Activated T-helper 1 cell treated with anti-CD3 and anti-CD28 coated beads, Interleukin-12 subunit alpha, Interleukin-12 subunit beta, Interleukin-2, Interleukin-4 antibody, amounts not matched to agents 30 ng/mL and 10 ng/mL and 1 ng/mL, durations not matched to agents 14 hours and 24 hours and 36 hours (primary cell): ENCODE measurements at regions of chr11 and their contacts with region 1.

Region 1: DNA sequence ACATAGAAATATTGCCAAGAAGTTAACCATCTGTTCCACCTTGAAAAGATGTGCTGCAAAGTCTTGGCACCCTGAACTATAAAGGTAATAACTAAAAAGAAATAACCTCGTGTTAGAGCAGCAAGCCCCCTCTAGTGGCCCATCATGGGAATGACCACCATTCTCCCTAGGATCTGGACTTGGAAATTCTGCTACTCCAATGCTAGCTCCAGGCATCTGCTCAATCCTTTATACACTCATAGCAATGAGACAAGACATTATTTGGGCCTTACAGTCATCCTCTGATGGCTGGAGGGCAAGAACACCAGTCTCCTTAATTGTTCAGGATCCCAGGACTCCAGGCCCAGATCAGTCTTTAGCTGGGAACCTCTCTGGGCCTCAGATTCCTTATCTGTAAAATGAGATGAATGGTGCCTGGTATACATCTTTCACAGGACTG is 76.0 kb downstream of the CWC15 start:
- DNase-seq: no peak
- H3K4me3 Mint-ChIP-seq: no peak overlapping the region
- H3K27ac Mint-ChIP-seq: no peak overlapping the region
- H3K4me1 Mint-ChIP-seq: no peaks in the 10 kb centered on the region
- H3K27me3 Mint-ChIP-seq: peaks cover 3% of the 10 kb centered on the region

Region 2: DNA sequence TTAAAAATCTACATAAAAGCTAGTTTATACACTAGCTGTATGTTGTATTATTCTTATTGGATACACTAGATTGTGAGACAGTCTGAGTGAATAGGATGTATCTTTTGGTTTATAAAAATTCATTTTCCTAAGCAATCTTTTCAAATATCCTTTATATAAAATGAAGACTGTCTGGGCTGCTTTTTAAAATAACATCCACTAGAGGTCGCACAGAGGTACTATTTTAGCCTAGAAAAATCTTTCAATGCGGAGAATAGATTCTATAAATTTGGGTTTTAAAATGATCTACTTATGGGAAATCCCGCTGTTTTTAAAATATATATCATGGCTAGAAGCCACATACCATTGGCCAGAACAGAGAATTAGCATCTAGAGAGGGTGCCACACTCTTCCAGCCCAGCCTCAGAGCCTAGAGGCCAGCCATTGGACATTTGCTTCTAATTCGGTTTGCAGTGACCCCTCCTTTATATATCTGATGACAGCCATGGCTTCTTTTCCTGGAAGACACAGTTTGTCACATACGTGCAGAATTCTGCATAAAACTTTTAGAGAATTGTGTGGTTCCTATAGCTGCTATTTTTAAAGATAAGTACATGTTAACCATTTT is 377.8 kb before region 1 on chr11:
- intact Hi-C with region 1: loop called (anchors 1 kb)
- DNase-seq: no peak
- H3K4me3 Mint-ChIP-seq: no peak overlapping the region
- H3K27ac Mint-ChIP-seq: no peak overlapping the region
- H3K4me1 Mint-ChIP-seq: no peaks in the 10 kb centered on the region
- H3K27me3 Mint-ChIP-seq: peaks cover 27% of the 10 kb centered on the region

Region 3: GRCh38 chr11:94623120-94623735 is 274.1 kb before region 1 on chr11:
- intact Hi-C with region 1: loop called (anchors 1 kb)
- DNase-seq: peak; percentile 27
- H3K4me3 Mint-ChIP-seq: no peak overlapping the region
- H3K27ac Mint-ChIP-seq: no peak overlapping the region
- H3K4me1 Mint-ChIP-seq: no peaks in the 10 kb centered on the region
- H3K27me3 Mint-ChIP-seq: peaks cover 7% of the 10 kb centered on the region

Region 4: DNA sequence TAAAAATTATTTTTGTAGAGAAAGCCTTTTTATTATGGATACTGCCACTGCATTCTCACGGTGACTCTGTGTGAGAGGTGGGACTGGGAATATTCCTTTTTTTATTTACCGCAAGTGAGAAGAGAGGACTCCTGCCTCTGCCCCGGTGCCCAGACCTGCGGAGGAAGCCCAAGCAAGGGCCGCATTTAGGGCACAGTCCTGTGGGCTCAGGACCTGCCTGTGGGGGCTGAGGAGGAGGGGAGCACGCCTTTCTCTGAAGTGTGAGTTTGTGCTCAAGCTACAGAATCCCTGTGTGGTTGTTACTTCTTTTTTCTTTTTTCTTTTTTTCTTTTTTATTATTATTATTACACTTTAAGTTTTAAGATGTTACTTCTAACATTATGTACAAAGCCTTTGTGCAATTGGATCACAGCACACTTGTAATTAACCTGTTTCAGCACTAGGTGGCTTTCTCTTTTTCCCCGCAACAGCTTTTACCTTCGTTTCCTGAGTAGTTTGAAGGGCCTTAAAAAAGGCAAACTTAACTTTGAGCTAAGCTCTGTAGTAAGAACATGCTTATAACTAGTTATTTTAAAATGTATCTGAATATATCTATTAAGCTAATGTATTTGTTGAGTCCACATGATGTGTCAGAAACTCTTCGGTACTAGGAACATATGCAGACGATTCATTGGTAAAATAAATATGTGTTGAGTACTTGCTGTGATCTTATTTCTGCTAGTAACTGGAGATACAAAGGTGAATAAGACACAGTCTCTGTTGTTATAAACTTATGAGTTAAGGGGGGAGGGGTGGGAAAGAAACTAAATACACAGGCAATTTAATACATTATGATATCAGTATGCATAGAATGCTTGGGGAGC is 110.9 kb before region 1 on chr11:
- intact Hi-C with region 1: loop called (anchors 1 kb)
- DNase-seq: no peak
- H3K4me3 Mint-ChIP-seq: no peak overlapping the region
- H3K27ac Mint-ChIP-seq: no peak overlapping the region
- H3K4me1 Mint-ChIP-seq: no peaks in the 10 kb centered on the region
- H3K27me3 Mint-ChIP-seq: peaks cover 4% of the 10 kb centered on the region

Region 5: GRCh38 chr11:95003716-95004115 is 106.4 kb after region 1 on chr11:
- intact Hi-C with region 1: no loop called
- DNase-seq: no peak
- H3K4me3 Mint-ChIP-seq: no peak overlapping the region
- H3K27ac Mint-ChIP-seq: no peak overlapping the region
- H3K4me1 Mint-ChIP-seq: no peaks in the 10 kb centered on the region
- H3K27me3 Mint-ChIP-seq: peaks cover 8% of the 10 kb centered on the region